ENCODE measurements at regions of chr3 and their contacts with region 1.

Region 1: GRCh38 chr3:134697830-134698689 is 47.2 kb upstream of the KY start:
- DNase-seq: peak; percentile 15
- ATAC-seq: peak; percentile 38

Region 2: GRCh38 chr3:134650431-134651346 is 47.4 kb before region 1 on chr3 and contains the start of gene KY:
- intact Hi-C with region 1: loop called (anchors 2 kb)
- DNase-seq: peak; percentile 81
- ATAC-seq: peak; percentile 87
- total RNA-seq, gene KY: 16.7 TPM

Region 3: GRCh38 chr3:134709561-134710312 is 11.7 kb after region 1 on chr3:
- intact Hi-C with region 1: no loop called
- DNase-seq: no peak
- ATAC-seq: peak; percentile 65